Esophagus muscularis mucosa (tissue), 4 donors: ENCODE measurements at regions of chr1 and their contacts with region 1.

Region 1: DNA sequence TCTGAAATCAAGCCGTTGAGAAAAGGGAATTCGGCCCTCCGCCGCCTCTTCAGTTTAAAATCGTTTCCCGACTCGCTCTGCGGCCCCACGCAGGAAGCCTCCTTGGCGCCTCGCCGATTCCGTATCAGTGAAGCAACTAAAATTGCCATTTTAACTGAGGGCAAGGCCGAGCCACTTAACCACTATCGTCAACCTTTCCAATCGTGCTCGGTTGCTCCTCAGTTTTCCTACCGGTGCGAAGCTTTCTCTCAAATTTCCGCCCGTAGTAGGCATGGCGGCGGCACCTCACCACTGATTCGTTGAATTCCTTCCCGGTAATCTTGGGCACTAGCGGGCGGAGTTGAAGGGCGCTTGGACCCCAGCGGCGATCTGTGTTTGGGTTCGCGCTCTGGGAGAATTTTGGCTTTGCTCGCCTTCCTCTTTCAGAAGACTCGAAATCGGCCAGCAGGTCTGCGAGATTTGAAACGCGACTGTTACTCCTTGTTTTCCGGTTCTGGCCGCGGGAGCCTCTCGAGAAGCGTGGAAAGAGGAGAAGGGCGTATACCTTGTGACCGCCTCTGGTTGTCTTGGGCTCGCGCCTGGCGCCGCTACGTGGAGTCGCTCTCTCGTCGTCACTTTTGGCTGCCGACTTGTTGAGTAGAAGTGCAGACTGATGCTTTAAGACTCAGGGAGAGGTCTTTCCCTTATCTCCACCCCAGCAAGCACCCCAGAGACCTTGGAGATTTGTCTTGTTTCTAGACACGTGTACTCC is at the starts of genes CENPL and DARS2:
- DNase-seq: peak; percentile 98
- H3K4me3 ChIP-seq: peak within 1 kb of the TSS; percentile 80 to 86 (median 82)
- H3K27ac ChIP-seq: peak within 1 kb of the TSS; percentile 90 to 95 (median 94)
- H3K4me1 ChIP-seq: peaks cover 10 to 39% (median 24%) of the 10 kb centered on the region in 4 donors
- H3K27me3 ChIP-seq: no peaks in the 10 kb centered on the region
- CTCF ChIP-seq: no peak
- EP300 ChIP-seq: no peak
- POLR2A ChIP-seq: no peak
- total RNA-seq, gene CENPL: 3.6 to 7.1 (median 5.8) TPM
- total RNA-seq, gene DARS2: 5.5 to 9.1 (median 7.7) TPM

Region 2: DNA sequence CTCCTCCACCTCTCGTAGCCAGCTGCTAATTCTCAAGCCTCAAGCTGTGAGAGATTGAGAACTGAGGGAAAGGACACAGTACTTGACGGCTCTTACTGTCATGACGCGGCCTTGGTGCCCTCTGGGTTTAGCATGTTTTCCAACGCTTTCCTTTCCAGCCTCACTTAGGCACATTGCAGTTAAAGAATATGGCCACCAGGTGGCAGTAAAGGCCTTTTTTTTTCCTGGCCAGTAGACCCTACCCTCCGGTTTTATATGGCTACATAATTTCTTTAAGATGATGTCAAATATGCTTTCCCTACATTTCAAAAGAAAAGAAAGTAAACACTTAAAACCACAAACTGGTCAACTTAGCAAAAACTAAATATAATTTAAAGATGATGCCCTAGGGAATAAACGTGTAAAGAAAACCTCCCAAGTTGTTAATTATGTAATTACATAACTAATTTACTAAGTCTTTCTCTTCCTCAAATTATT is 404.1 kb before region 1 on chr1:
- intact Hi-C with region 1: loop called (anchors 5 kb)
- DNase-seq: no peak
- H3K4me3 ChIP-seq: no peak overlapping the region
- H3K27ac ChIP-seq: no peak overlapping the region
- H3K4me1 ChIP-seq: peaks cover 3 to 12% (median 7%) of the 10 kb centered on the region in 4 donors
- H3K27me3 ChIP-seq: no peaks in the 10 kb centered on the region
- CTCF ChIP-seq: peak; percentile 91 to 92 (median 92)
- EP300 ChIP-seq: no peak
- POLR2A ChIP-seq: no peak

Region 3: GRCh38 chr1:173876732-173877131 is 52.2 kb after region 1 on chr1:
- intact Hi-C with region 1: no loop called
- DNase-seq: no peak
- H3K4me3 ChIP-seq: no peak overlapping the region
- H3K27ac ChIP-seq: no peak overlapping the region
- H3K4me1 ChIP-seq: peaks cover 0 to 1% (median 0%) of the 10 kb centered on the region in 4 donors
- H3K27me3 ChIP-seq: no peaks in the 10 kb centered on the region
- CTCF ChIP-seq: no peak
- EP300 ChIP-seq: no peak
- POLR2A ChIP-seq: no peak